Mammary epithelial cell (primary cell): ENCODE measurements at regions of chr3 and their contacts with region 1.

Region 1: GRCh38 chr3:48465531-48466378 is 19.2 kb downstream of the ATRIP start:
- DNase-seq: peak; percentile 100
- H3K4me3 ChIP-seq: peak overlapping the region; percentile 26 to 55 (median 50)
- H3K27ac ChIP-seq: peak overlapping the region; percentile 99
- H3K4me1 ChIP-seq: peaks cover 33% of the 10 kb centered on the region
- H3K27me3 ChIP-seq: no peaks in the 10 kb centered on the region
- CTCF ChIP-seq: peak; percentile 45 to 81

Region 2: DNA sequence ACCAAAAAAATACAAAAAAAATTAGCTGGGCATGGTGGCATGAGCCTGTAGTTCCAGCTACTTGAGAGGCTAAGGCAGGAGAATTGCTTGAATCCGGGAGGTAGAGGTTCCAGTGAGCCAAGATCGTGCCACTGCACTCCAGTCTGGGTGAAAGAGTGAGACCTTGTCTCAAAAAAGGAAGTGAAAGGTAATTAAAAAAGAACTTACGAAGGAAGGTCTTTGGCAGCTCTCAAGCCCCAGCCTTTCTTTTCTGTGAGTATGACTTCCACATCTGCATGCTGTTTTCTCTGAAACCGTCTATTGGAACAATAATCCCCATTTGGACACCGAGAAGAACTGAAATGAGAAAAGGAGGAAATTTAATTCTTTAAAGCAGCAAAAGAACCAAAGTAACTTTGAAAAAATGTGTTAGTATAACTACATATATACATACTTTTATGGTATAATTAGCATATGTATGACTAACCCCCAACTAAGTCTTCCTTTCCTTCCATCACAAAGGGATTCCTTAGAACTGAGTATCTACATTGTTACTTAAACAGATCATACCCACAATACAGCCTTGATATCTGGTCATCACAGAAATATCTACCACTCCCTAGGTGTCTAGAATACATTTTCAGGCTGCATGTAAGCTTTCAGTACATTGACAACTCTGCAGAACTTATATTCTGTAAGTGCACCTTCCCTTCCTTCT is 1351.9 kb before region 1 on chr3:
- CTCF ChIA-PET with region 1: no interaction called
- dilution Hi-C with region 1: no loop called
- in situ Hi-C with region 1: no loop called
- intact Hi-C with region 1: no loop called
- DNase-seq: peak; percentile 79
- H3K4me3 ChIP-seq: no peak overlapping the region
- H3K27ac ChIP-seq: peak overlapping the region; percentile 87
- H3K4me1 ChIP-seq: peaks cover 23% of the 10 kb centered on the region
- H3K27me3 ChIP-seq: no peaks in the 10 kb centered on the region
- CTCF ChIP-seq: no peak

Region 3: GRCh38 chr3:48247401-48247811 is 218.3 kb before region 1 on chr3:
- CTCF ChIA-PET with region 1: no interaction called
- dilution Hi-C with region 1: no loop called
- in situ Hi-C with region 1: no loop called
- intact Hi-C with region 1: no loop called
- DNase-seq: peak; percentile 71
- H3K4me3 ChIP-seq: no peak overlapping the region
- H3K27ac ChIP-seq: peak overlapping the region; percentile 62
- H3K4me1 ChIP-seq: peaks cover 17% of the 10 kb centered on the region
- H3K27me3 ChIP-seq: no peaks in the 10 kb centered on the region
- CTCF ChIP-seq: no peak

Region 4: GRCh38 chr3:48507351-48508061 is 41.8 kb after region 1 on chr3:
- CTCF ChIA-PET with region 1: no interaction called
- dilution Hi-C with region 1: no loop called
- in situ Hi-C with region 1: no loop called
- intact Hi-C with region 1: loop called (anchors 1 kb)
- DNase-seq: peak; percentile 92
- H3K4me3 ChIP-seq: no peak overlapping the region
- H3K27ac ChIP-seq: peak overlapping the region; percentile 58
- H3K4me1 ChIP-seq: peaks cover 39% of the 10 kb centered on the region
- H3K27me3 ChIP-seq: no peaks in the 10 kb centered on the region
- CTCF ChIP-seq: peak; percentile 56 to 69

Region 5: DNA sequence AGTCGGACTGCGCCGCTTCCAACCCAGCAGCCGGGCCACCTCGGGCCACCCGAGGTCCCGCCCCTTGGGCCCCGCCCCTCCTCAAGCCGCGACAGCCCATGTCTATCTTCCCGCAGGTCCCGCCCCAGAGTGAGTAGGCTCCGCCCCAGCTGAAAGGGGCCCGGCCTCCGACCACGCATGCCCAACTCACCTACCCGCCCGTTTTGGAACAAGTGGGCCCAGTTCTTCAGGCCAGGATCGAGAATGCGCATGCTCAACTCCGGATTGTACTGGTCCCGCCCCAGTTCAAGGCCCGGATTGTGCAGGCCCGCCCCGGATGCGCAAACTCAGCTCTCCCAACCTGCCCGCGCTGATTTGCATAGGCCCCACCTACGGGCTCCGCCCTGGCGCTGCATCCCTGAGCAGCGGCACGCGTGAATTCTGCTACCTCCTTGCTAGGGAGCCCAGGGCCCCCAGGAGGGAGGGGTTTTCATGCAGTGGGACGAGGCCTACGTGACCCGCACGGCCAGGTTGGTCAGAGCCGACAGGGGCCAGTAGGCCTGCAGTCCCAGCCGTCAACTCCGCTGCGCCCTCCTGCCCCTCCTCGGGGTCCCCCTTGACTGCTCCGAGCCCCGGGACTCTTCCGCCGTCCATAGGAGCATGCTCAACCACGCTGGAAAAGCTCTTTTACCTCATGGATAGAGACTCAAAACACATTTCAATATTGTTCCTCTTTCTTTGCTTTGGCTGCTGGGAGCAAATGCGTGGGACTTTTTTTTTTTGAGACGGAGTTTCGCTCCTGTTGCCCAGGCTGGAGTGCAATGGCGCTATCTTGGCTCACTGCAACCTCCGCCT is 91.3 kb after region 1 on chr3 and contains the start of gene PFKFB4:
- CTCF ChIA-PET with region 1: no interaction called
- dilution Hi-C with region 1: loop called (anchors 5 kb)
- in situ Hi-C with region 1: loop called in 1 of 2 experiments (anchors 5 kb)
- intact Hi-C with region 1: no loop called
- DNase-seq: peak; percentile 99
- H3K4me3 ChIP-seq: peak within 1 kb of the TSS; percentile 37 to 79 (median 64)
- H3K27ac ChIP-seq: peak within 1 kb of the TSS; percentile 47
- H3K4me1 ChIP-seq: peaks cover 47% of the 10 kb centered on the region
- H3K27me3 ChIP-seq: no peaks in the 10 kb centered on the region
- CTCF ChIP-seq: no peak
- total RNA-seq, gene PFKFB4: 14.7 to 45.3 TPM

Region 6: GRCh38 chr3:48595526-48596121 is 129.9 kb after region 1 on chr3:
- CTCF ChIA-PET with region 1: no interaction called
- dilution Hi-C with region 1: no loop called
- in situ Hi-C with region 1: no loop called
- intact Hi-C with region 1: loop called (anchors 2 kb)
- DNase-seq: peak; percentile 98
- H3K4me3 ChIP-seq: peak overlapping the region in 2 of 3 experiments; percentile 60 to 79
- H3K27ac ChIP-seq: peak overlapping the region; percentile 97
- H3K4me1 ChIP-seq: peaks cover 82% of the 10 kb centered on the region
- H3K27me3 ChIP-seq: no peaks in the 10 kb centered on the region
- CTCF ChIP-seq: no peak

Region 7: GRCh38 chr3:48656061-48656840 is 190.5 kb after region 1 on chr3:
- CTCF ChIA-PET with region 1: no interaction called
- dilution Hi-C with region 1: no loop called
- in situ Hi-C with region 1: loop called in 1 of 2 experiments (anchors 25 kb)
- intact Hi-C with region 1: loop called (anchors 1 kb)
- DNase-seq: peak; percentile 74
- H3K4me3 ChIP-seq: peak overlapping the region in 2 of 3 experiments; percentile 43
- H3K27ac ChIP-seq: no peak overlapping the region
- H3K4me1 ChIP-seq: peaks cover 8% of the 10 kb centered on the region
- H3K27me3 ChIP-seq: no peaks in the 10 kb centered on the region
- CTCF ChIP-seq: peak; percentile 52 to 64

Region 8: GRCh38 chr3:48685602-48686511 is 220.1 kb after region 1 on chr3 and contains the start of gene NCKIPSD:
- CTCF ChIA-PET with region 1: no interaction called
- dilution Hi-C with region 1: no loop called
- in situ Hi-C with region 1: no loop called
- intact Hi-C with region 1: loop called (anchors 2 kb)
- DNase-seq: peak; percentile 79
- H3K4me3 ChIP-seq: peak within 1 kb of the TSS; percentile 51 to 91 (median 79)
- H3K27ac ChIP-seq: peak within 1 kb of the TSS; percentile 69
- H3K4me1 ChIP-seq: peaks cover 32% of the 10 kb centered on the region
- H3K27me3 ChIP-seq: no peaks in the 10 kb centered on the region
- CTCF ChIP-seq: peak; percentile 45 to 87
- total RNA-seq, gene NCKIPSD: 14.8 to 21.1 TPM

Region 9: DNA sequence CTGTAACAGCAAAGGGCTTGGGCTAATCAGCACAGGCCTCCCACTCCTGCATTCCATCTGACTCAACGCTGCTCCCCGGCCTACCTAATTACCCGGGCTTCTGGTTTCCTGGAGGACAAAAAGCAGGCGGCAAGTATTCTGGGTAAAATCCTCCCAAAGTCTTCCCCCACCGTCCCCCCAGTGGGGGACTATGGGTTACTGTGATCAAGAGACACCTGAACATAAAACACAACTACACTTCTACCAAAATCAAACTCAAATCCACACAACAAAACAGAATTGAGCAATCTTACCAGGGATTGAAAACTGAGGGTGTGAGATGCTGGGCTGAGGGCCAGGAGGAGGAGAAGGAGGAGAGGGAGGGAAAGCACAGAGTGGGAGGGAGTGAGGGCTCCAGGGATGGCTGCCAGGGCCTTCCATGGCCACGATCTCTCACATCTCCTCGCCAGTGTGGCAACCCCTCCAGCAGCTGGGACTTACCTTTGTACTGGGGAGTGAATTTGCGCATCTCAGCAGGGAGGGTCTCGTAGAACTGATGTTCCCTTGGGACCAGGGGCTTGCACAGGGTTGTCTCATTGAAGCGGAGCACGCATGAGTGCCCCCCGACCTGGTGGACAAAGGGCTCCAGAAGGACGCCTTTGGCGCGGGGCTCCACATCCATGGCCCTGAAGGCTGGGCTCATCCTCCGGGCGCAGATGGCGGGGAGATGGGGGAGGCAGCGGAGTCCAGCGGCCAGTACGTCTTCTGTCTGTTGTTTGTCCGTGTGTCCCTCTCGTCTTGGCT is 229.0 kb after region 1 on chr3:
- CTCF ChIA-PET with region 1: no interaction called
- dilution Hi-C with region 1: no loop called
- in situ Hi-C with region 1: no loop called
- intact Hi-C with region 1: loop called (anchors 2 kb)
- DNase-seq: peak; percentile 85
- H3K4me3 ChIP-seq: peak overlapping the region in 2 of 3 experiments; percentile 30 to 37
- H3K27ac ChIP-seq: peak overlapping the region; percentile 81
- H3K4me1 ChIP-seq: peaks cover 43% of the 10 kb centered on the region
- H3K27me3 ChIP-seq: no peaks in the 10 kb centered on the region
- CTCF ChIP-seq: no peak

Region 10: DNA sequence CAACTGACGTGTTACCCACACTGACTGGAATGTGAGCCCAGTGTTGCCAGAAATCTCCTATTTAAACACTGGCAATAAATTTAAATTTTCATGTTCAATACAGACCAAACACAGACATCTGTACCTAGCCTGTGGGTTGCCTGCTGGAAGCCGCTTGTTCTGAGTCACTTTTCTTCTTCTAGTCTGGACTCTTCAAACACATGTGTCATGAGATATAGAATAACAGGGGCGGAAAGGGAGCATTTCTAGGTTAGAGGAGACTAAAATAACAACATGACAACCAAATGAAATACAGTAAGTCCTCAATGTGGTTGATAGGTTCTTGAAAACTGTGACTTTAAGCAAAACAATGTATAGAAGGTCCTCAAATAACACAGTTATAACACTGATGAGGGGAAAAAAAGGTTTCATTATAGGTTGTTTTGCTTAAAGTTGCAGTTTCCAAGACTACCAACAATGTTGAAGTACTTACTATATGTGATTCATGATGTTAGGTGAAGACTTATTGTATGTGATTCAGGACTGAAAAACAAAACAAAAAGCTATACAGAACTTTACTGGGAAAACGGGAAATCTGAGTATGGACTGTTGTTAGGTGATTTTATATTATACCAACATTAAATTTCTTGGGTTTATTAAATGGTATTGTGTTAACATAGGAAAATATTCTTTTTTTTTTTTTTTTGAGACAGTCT is 318.8 kb after region 1 on chr3:
- CTCF ChIA-PET with region 1: no interaction called
- dilution Hi-C with region 1: no loop called
- in situ Hi-C with region 1: no loop called
- intact Hi-C with region 1: no loop called
- DNase-seq: peak; percentile 16
- H3K4me3 ChIP-seq: no peak overlapping the region
- H3K27ac ChIP-seq: peak overlapping the region; percentile 17
- H3K4me1 ChIP-seq: no peaks in the 10 kb centered on the region
- H3K27me3 ChIP-seq: no peaks in the 10 kb centered on the region
- CTCF ChIP-seq: no peak

Region 11: GRCh38 chr3:48811524-48811923 is 345.8 kb after region 1 on chr3:
- CTCF ChIA-PET with region 1: no interaction called
- dilution Hi-C with region 1: no loop called
- in situ Hi-C with region 1: no loop called
- intact Hi-C with region 1: no loop called
- DNase-seq: no peak
- H3K4me3 ChIP-seq: no peak overlapping the region
- H3K27ac ChIP-seq: no peak overlapping the region
- H3K4me1 ChIP-seq: peaks cover 4% of the 10 kb centered on the region
- H3K27me3 ChIP-seq: no peaks in the 10 kb centered on the region
- CTCF ChIP-seq: no peak